ENCODE measurements at regions of chr4 and their contacts with region 1.

Region 1: DNA sequence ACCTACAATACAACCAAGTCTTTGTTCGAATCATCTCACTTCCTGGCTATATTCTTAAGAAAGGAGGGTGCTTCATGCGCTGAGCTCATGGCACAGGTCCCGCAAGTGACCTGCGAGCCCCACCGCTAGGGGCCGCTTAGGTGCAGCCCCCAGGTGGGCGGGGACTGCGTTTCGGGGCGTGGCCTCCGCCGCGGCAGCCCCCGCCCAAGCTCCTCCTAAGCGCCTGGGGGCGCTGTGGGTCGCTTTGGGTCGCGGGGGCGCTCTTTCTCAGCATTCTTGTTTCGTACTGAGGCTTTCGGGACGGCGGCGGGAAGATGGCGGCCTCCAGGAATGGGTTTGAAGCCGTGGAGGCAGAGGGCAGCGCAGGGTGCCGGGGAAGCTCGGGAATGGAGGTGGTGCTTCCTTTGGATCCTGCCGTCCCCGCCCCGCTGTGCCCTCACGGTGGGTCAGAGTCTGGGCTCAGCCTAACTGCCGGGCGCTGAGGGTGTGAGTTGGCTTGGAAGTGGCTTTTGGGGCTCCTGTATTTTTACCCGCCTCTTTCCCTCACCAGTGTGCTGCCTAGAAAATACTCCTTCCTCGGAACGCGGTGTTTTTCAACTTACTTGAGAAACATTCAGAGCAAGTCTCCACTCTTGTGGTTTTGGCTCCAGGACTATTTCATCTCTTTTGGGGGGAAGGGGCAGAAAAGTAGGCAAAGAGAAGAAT is at the start of gene ZCCHC4:
- H3K4me3 ChIP-seq: peak within 1 kb of the TSS; percentile 94
- H3K27ac ChIP-seq: 0 out of 2 replicates have a peak within 1 kb of the TSS, but pooled peaks have one; percentile 3
- H3K4me1 ChIP-seq: no peaks in the 10 kb centered on the region
- CTCF ChIP-seq: peak; percentile 97

Region 2: DNA sequence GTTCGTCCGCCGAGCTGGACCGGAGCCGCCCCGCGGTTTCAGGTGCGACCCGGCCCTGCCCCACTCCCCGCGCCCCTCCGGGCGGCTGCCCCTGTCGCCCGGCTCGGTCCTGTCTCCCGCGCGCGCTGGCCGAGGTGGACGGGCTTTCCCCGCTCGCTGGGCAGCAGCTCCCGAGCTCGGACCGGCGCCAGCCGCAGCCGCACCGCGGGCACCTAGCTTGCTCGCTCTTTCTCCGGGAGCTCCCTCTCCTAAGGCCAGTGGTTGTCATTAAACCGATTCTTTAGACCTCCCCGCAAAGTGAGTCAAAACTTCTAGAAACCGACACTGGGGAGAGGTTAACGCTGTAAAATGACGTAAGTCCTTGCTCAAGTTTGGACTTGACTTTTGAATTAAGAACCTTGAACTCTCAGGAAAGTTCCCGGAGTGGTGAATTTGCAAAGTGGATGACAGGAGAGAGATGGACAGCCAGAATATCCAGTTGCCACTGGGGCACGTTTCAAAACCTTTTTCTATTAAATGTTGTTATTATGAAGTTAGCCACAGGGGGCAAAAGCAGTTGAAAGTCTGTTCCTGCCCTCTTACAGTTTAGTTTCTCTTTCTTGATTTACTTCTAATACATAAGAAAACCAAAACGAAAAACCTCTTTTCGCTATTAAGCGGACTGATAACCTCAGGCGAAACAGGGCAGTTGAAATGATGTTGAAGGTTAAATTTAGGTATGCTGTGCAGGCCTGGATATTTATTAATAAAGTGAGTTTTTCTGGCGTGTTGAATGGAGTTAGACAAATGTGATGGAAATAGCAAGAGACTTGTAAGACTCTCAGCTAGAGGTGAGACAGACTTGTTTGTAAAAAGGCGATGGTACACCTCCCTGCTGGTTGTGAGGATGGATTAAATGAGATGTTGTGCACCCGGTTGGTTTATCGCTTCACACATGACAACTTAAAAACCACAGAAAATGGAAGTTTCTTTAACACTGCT is 78.0 kb before region 1 on chr4:
- CTCF ChIA-PET with region 1: interaction called, 18 read pairs
- POLR2A ChIA-PET with region 1: interaction called, 5 read pairs
- H3K4me3 ChIP-seq: peak overlapping the region; percentile 78
- H3K27ac ChIP-seq: peak overlapping the region; percentile 80
- H3K4me1 ChIP-seq: no peaks in the 10 kb centered on the region
- CTCF ChIP-seq: no peak

Region 3: GRCh38 chr4:25291158-25291733 is 21.4 kb before region 1 on chr4:
- CTCF ChIA-PET with region 1: interaction called, 21 read pairs
- POLR2A ChIA-PET with region 1: no interaction called
- H3K4me3 ChIP-seq: no peak overlapping the region
- H3K27ac ChIP-seq: no peak overlapping the region
- H3K4me1 ChIP-seq: no peaks in the 10 kb centered on the region
- CTCF ChIP-seq: no peak

Region 4: DNA sequence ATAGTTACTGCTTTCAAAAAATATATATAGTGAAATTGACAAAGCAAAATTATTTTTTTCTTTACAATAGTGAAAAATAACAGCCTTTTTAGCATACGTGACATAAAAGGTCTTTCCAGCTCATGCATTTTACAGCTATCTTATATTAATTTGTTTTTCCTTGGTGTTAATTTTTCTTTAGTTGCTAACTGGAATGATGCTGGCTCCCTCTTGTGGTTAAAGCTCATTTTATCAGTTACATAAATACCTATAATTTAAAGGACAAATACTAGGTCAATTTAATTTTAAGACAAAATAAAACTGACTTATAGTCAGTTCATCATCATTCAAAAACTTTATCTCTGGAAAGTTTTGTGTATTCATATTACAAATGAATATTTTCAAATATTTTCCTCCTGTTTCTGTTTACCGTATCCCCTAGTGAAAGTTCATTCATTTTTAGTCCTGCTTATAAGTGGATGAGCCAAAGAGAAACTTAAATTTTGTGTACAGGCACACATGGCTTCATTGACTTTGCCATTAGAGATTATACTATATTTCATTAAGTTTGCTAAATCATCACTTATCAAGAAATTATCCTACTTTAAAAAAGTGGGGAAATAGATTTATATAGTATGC is 54.5 kb after region 1 on chr4:
- CTCF ChIA-PET with region 1: interaction called, 25 read pairs
- POLR2A ChIA-PET with region 1: no interaction called
- H3K4me3 ChIP-seq: no peak overlapping the region
- H3K27ac ChIP-seq: no peak overlapping the region
- H3K4me1 ChIP-seq: no peaks in the 10 kb centered on the region; the same call in 1 of the 2 replicates
- CTCF ChIP-seq: no peak

Region 5: DNA sequence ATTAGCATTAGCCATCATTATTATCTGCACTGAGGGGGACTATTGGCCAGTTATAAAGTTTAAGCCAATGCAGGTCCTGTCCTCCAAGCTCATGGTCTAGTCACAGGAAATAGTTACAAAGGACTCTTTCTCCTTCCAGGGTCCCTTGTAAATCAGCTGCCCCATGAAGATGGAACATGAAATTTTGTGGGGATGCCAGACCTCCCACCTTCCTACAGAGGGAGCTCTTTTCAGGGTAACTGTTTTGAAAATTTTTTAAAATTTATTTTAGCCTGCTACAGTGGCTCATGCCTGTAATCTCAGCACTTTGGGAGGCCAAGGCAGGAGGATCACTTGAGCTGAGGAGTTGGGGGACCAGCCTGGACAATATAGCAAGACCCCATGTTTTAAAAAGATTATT is 218.6 kb after region 1 on chr4:
- CTCF ChIA-PET with region 1: no interaction called
- POLR2A ChIA-PET with region 1: no interaction called
- H3K4me3 ChIP-seq: no peak overlapping the region
- H3K27ac ChIP-seq: no peak overlapping the region
- H3K4me1 ChIP-seq: no peaks in the 10 kb centered on the region
- CTCF ChIP-seq: no peak